ENCODE measurements at regions of chr2 and their contacts with region 1.

Region 1: GRCh38 chr2:166057370-166058164 is 70.3 kb downstream of the SCN1A start:
- DNase-seq: no peak
- CTCF ChIP-seq: peak; percentile 7

Region 2: GRCh38 chr2:166042768-166043390 is 14.7 kb before region 1 on chr2:
- CTCF ChIA-PET with region 1: interaction called, 11 read pairs
- POLR2A ChIA-PET with region 1: no interaction called
- DNase-seq: no peak
- CTCF ChIP-seq: no peak